H1 (cell line): ENCODE measurements at regions of chr2 and their contacts with region 1.

Region 1: DNA sequence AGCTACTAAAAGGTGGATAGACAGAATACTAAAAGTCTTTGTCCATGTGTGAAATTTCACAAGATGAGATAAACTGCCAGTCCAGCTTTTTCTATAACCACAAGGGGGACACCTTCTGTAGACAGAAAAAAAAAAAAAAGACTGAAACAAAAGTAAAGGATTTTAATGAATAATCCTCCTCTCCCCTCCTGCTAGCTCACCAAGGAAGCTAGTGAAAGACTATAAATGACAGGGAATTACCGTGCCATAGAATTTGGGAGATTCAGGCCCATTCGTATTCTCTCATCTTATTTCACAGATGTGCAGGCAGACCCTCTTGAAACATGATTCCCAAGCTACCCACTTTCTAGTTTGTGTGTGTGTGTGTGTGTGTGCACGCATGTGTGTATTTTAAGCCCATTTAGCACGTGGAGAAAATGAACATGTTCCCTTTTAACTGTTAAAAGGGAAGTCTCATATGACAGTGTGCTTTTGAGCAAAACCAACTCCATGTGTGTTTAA is 36.3 kb upstream of the SLC8A1 start:
- DNase-seq: no peak
- H3K4me3 ChIP-seq: no peak overlapping the region
- H3K27ac ChIP-seq: no peak overlapping the region
- H3K4me1 ChIP-seq: peaks cover 0 to 7% (median 0%) of the 10 kb centered on the region in 4 experiments; a peak in 1 of 7 replicates
- H3K27me3 ChIP-seq: peaks cover 0 to 1% (median 0%) of the 10 kb centered on the region in 4 experiments; a peak in 1 of 7 replicates
- CTCF ChIP-seq: peak in 2 of 3 experiments; percentile 3 to 40; a peak in 2 of 4 replicates
- EP300 ChIP-seq: no peak
- POLR2A ChIP-seq: no peak
- RAD21 ChIP-seq: peak in 1 of 2 experiments; percentile 16; a peak in 2 of 4 replicates

Region 2: GRCh38 chr2:40448468-40449079 is 39.6 kb before region 1 on chr2:
- CTCF ChIA-PET with region 1: interaction called, 10 read pairs
- POLR2A ChIA-PET with region 1: no interaction called
- DNase-seq: no peak
- H3K4me3 ChIP-seq: no peak overlapping the region
- H3K27ac ChIP-seq: no peak overlapping the region
- H3K4me1 ChIP-seq: peaks cover 3 to 12% (median 4%) of the 10 kb centered on the region in 4 experiments; a peak in 6 of 7 replicates
- H3K27me3 ChIP-seq: peaks cover 5 to 35% (median 24%) of the 10 kb centered on the region in 4 experiments; a peak in 6 of 7 replicates
- CTCF ChIP-seq: peak in 2 of 3 experiments; percentile 62 to 76; a peak in 3 of 4 replicates
- EP300 ChIP-seq: no peak
- POLR2A ChIP-seq: no peak
- RAD21 ChIP-seq: peak; percentile 61 to 74

Region 3: GRCh38 chr2:40477371-40477770 is 10.8 kb before region 1 on chr2:
- CTCF ChIA-PET with region 1: interaction called, 12 read pairs
- POLR2A ChIA-PET with region 1: no interaction called
- DNase-seq: no peak
- H3K4me3 ChIP-seq: no peak overlapping the region
- H3K27ac ChIP-seq: no peak overlapping the region
- H3K4me1 ChIP-seq: no peaks in the 10 kb centered on the region
- H3K27me3 ChIP-seq: no peaks in the 10 kb centered on the region
- CTCF ChIP-seq: no peak
- EP300 ChIP-seq: no peak
- POLR2A ChIP-seq: no peak
- RAD21 ChIP-seq: no peak

Region 4: DNA sequence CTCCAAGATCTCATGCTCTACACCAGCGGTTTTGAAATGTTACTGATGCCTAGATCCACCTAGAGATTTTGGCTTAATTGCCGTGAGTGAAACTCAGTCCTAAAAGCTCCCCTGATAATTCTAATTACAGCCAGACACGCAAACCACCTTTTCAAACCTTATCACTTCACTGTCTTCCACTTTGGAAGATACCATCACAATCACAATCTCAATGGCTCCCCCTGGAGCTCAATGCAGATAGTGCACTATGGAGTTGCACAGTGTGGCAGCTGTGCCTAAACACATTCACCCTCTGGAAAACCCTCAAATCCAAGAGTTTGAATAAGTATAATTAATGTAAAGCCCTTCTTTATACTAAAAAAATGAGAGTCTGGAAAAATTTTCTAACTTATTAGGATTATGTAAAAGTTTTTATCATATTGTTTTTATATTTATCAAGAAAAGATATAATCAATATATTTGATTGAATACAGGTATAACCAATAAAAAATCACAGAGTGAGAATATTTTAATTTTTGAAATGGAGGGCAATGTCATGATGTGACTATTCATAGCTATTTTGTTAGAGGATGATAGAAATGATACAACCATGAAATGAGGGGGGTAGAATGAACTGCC is 66.6 kb after region 1 on chr2:
- CTCF ChIA-PET with region 1: interaction called, 15 read pairs
- POLR2A ChIA-PET with region 1: no interaction called
- DNase-seq: peak; percentile 21 to 88
- H3K4me3 ChIP-seq: no peak overlapping the region
- H3K27ac ChIP-seq: no peak overlapping the region
- H3K4me1 ChIP-seq: no peaks in the 10 kb centered on the region
- H3K27me3 ChIP-seq: no peaks in the 10 kb centered on the region
- CTCF ChIP-seq: peak; percentile 48 to 86 (median 73)
- EP300 ChIP-seq: no peak
- POLR2A ChIP-seq: no peak
- RAD21 ChIP-seq: peak; percentile 80 to 85

Region 5: GRCh38 chr2:40642237-40642636 is 154.1 kb after region 1 on chr2:
- CTCF ChIA-PET with region 1: no interaction called
- POLR2A ChIA-PET with region 1: no interaction called
- DNase-seq: no peak
- H3K4me3 ChIP-seq: no peak overlapping the region
- H3K27ac ChIP-seq: no peak overlapping the region
- H3K4me1 ChIP-seq: no peaks in the 10 kb centered on the region
- H3K27me3 ChIP-seq: no peaks in the 10 kb centered on the region
- CTCF ChIP-seq: no peak
- EP300 ChIP-seq: no peak
- POLR2A ChIP-seq: no peak
- RAD21 ChIP-seq: no peak